Right ventricle myocardium inferior (tissue), 1 donor: ENCODE measurements at regions of chr14 and their contacts with region 1.

Region 1: DNA sequence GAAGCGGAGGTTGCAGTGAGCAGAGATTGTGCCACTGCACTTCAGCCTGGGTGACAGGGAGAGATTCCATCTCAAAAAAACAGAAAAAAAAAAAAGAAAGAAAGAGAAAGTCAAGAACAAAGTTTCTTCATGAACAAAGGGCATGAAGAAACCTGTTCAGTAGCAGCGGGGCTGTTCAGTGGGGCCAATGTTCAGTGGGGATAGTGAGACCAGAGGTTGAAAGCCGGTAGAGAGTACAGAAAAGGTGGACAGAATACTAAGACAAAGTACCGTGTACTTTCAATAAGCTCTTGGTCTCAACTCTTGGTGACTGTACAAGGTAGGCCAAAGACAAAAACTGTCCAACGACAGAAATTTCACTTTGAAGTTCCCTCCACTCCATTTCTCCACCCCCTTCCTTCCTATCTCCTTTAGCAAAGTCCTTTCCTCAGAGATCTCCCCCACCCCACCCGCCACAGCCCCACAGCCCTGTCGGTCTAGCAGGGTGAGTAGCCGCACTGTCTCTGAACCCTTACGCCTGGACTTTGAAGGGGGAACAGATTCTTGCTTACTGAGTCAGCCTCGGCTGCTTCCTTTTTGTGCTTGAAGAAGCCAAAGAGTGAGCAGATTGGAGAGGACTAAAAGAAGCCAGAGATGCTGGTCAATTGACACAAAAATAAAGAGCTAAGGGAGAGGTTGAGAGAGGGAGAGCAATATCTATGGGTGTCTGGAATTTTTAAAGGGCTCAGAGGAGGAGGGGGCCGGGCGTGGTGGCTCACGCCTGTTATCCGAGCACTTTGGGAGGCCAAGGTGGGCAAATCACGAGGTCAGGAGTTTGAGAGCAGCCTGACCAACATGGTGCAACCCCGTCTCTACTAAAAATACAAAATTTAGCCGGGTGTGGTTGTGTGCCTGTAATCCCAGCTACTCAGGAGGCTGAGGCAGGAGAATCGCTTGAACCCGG is 44.2 kb upstream of the FOS start:
- DNase-seq: no peak
- ATAC-seq: no peak

Region 2: DNA sequence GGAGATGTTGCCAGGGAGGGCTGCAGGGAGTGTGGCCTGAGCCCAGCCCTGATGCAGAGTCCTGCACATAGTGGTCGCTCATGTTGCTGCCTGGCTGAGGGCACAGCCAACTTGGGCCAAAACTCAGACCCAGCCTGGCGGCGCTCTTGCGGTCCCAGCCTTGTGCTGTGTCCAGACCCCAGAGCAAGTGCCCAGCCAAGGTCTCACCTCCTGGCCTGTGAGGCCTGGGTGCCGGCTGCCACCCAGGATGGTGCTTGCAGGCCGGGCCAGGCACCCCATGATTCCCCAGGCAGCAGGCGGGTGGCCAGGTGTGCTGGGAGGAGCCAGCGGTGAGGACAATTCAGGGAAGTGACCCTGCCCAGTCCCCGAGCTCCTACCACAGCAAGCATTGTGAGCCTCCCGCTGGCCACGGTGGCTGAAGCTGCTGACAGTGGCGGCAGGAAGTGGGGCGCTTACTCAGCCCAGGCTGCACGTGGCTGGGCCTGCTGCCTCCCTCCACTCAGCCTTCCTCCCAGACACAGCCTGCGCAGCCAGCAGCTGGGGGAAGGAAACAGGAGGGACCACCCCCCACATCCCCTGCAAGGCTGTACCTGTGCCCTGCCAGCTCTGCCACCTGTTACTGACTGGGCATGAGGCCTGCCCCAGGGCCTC is 261.3 kb before region 1 on chr14:
- intact Hi-C with region 1: no loop called
- DNase-seq: peak; percentile 87
- ATAC-seq: peak; percentile 24

Region 3: GRCh38 chr14:75126679-75127473 is 107.6 kb before region 1 on chr14 and contains the start of gene NEK9:
- intact Hi-C with region 1: loop called (anchors 5 kb)
- DNase-seq: peak; percentile 93
- ATAC-seq: peak; percentile 95
- total RNA-seq, gene NEK9: 102 TPM

Region 4: GRCh38 chr14:75176142-75176820 is 58.2 kb before region 1 on chr14 and contains the start of gene TMED10:
- intact Hi-C with region 1: loop called (anchors 2 kb)
- DNase-seq: peak; percentile 93
- ATAC-seq: peak; percentile 95
- total RNA-seq, gene TMED10: 280 TPM

Region 5: GRCh38 chr14:75198291-75198933 is 36.0 kb before region 1 on chr14:
- intact Hi-C with region 1: no loop called
- DNase-seq: peak; percentile 68
- ATAC-seq: peak; percentile 76

Region 6: DNA sequence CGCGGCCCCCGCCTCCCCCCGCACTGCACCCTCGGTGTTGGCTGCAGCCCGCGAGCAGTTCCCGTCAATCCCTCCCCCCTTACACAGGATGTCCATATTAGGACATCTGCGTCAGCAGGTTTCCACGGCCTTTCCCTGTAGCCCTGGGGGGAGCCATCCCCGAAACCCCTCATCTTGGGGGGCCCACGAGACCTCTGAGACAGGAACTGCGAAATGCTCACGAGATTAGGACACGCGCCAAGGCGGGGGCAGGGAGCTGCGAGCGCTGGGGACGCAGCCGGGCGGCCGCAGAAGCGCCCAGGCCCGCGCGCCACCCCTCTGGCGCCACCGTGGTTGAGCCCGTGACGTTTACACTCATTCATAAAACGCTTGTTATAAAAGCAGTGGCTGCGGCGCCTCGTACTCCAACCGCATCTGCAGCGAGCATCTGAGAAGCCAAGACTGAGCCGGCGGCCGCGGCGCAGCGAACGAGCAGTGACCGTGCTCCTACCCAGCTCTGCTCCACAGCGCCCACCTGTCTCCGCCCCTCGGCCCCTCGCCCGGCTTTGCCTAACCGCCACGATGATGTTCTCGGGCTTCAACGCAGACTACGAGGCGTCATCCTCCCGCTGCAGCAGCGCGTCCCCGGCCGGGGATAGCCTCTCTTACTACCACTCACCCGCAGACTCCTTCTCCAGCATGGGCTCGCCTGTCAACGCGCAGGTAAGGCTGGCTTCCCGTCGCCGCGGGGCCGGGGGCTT is 44.1 kb after region 1 on chr14 and contains the start of gene FOS:
- intact Hi-C with region 1: loop called (anchors 5 kb)
- DNase-seq: peak; percentile 97
- ATAC-seq: peak; percentile 87
- total RNA-seq, gene FOS: 9.5 TPM